ENCODE measurements at regions of chrX and their contacts with region 1.

Region 1: GRCh38 chrX:104922206-104922621 is 298.3 kb downstream of the TEX13A start:
- DNase-seq: peak; percentile 2
- H3K4me3 ChIP-seq: no peak overlapping the region
- H3K27ac ChIP-seq: no peak overlapping the region
- H3K27me3 ChIP-seq: no peaks in the 10 kb centered on the region
- CTCF ChIP-seq: peak; percentile 75

Region 2: DNA sequence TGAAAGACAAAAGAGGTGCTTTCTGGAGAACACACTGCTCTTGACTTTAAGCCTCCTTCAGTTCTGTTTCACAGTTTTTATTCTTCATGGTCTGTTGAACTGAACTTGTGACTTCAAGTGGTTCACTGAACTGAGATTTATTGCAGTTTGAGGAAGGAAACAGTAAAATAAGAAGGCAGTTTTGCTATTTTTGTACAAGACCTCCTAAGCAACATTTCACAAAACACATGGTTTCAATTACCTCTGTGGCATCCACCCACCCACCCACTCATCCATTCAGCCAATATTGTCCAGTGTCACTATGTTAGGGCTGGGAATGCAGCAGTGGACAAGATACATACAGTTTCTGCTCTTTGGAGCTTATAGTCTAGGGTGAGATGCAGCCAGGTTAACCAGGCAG is 224.9 kb before region 1 on chrX:
- CTCF ChIA-PET with region 1: no interaction called
- POLR2A ChIA-PET with region 1: no interaction called
- DNase-seq: no peak
- H3K4me3 ChIP-seq: no peak overlapping the region
- H3K27ac ChIP-seq: no peak overlapping the region
- H3K27me3 ChIP-seq: no peaks in the 10 kb centered on the region
- CTCF ChIP-seq: no peak

Region 3: DNA sequence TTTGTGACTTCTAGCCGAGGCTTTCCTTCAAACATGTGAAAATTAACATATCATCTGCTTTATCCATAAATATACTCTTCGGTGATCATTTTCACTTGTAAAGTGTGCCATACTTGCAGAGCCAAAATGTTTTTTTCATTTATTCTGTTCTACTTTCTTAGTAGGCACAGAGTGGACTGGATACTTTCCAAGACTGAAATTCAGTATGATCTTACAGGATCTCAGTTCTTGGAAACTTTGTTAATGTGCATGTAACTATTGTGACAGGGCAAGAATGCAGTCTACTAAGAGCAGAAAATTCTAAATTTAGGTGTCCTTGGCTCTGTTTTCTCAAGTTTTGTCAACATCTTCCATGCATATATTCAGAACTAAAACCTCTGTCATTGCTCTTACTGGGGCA is 13.4 kb after region 1 on chrX:
- CTCF ChIA-PET with region 1: interaction called, 14 read pairs
- POLR2A ChIA-PET with region 1: no interaction called
- DNase-seq: no peak
- H3K4me3 ChIP-seq: no peak overlapping the region
- H3K27ac ChIP-seq: no peak overlapping the region
- H3K27me3 ChIP-seq: no peaks in the 10 kb centered on the region
- CTCF ChIP-seq: no peak

Measured in AG04450 (cell line).